ENCODE measurements at regions of chr16 and their contacts with region 1.

Region 1: GRCh38 chr16:88811769-88812512 is at the start of gene APRT:
- DNase-seq: peak; percentile 93
- H3K4me3 ChIP-seq: peak within 1 kb of the TSS; percentile 75
- H3K27ac ChIP-seq: peak within 1 kb of the TSS; percentile 76
- H3K4me1 ChIP-seq: peaks cover 24% of the 10 kb centered on the region
- CTCF ChIP-seq: no peak
- total RNA-seq, gene APRT: 168 and 216 TPM in 2 replicates

Region 2: DNA sequence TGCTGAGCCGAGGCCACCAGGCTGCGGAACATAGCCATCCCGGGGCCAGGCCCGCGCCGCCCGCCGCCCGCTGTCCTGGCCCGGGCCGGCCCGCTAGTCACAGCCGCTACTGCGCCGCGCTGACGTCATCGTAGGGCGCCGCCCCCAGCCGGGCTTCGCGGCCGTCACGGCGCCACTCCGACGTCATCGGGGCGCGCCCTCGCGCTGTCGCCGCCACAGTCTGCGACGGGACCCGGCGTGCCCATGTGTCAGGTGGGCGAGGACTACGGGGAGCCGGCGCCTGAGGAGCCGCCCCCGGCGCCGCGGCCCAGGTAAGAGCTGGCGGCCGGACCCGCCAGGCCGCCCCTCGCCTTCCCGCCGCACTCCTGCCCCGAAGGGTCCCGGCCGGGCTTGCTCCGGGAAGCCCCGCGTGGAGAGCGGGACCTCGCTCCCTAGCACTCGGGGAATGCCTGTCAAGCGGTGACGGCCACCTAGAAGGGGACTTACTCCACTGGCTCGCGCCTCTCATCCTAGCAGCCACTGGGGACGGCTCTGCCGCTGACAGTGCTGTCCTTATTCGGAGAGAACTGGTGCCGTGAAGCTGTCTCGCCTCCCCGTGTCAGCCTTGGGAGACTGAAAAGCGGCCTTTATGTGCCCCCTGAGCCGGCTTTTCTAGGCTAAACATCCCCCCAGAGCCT is 105.5 kb before region 1 on chr16 and contains the starts of genes CTU2 and RNF166:
- CTCF ChIA-PET with region 1: no interaction called
- POLR2A ChIA-PET with region 1: no interaction called
- intact Hi-C with region 1: no loop called
- DNase-seq: peak; percentile 91
- H3K4me3 ChIP-seq: peak within 1 kb of the TSS; percentile 89
- H3K27ac ChIP-seq: peak within 1 kb of the TSS; percentile 71
- H3K4me1 ChIP-seq: peaks cover 53% of the 10 kb centered on the region
- CTCF ChIP-seq: no peak
- total RNA-seq, gene CTU2: 18.5 and 21.9 TPM in 2 replicates
- total RNA-seq, gene RNF166: 39.2 and 52.4 TPM in 2 replicates

Region 3: GRCh38 chr16:88791755-88792550 is 20.0 kb before region 1 on chr16:
- CTCF ChIA-PET with region 1: interaction called, 8 read pairs
- POLR2A ChIA-PET with region 1: interaction called, 10 read pairs
- intact Hi-C with region 1: no loop called
- DNase-seq: no peak
- H3K4me3 ChIP-seq: peak overlapping the region; percentile 24
- H3K27ac ChIP-seq: peak overlapping the region; percentile 80
- H3K4me1 ChIP-seq: peaks cover 61% of the 10 kb centered on the region
- CTCF ChIP-seq: no peak

Region 4: GRCh38 chr16:88838991-88839529 is 27.1 kb after region 1 on chr16:
- CTCF ChIA-PET with region 1: no interaction called
- POLR2A ChIA-PET with region 1: no interaction called
- intact Hi-C with region 1: no loop called
- DNase-seq: no peak
- H3K4me3 ChIP-seq: no peak overlapping the region
- H3K27ac ChIP-seq: no peak overlapping the region
- H3K4me1 ChIP-seq: no peaks in the 10 kb centered on the region
- CTCF ChIP-seq: no peak

Region 5: GRCh38 chr16:88856828-88857733 is 45.1 kb after region 1 on chr16 and contains the starts of genes GALNS and TRAPPC2L:
- CTCF ChIA-PET with region 1: no interaction called
- POLR2A ChIA-PET with region 1: no interaction called
- intact Hi-C with region 1: loop called (anchors 1 kb)
- DNase-seq: peak; percentile 99
- H3K4me3 ChIP-seq: peak within 1 kb of the TSS; percentile 83
- H3K27ac ChIP-seq: peak within 1 kb of the TSS; percentile 6
- H3K4me1 ChIP-seq: peaks cover 25% of the 10 kb centered on the region
- CTCF ChIP-seq: no peak
- total RNA-seq, gene GALNS: 17.2 and 18.5 TPM in 2 replicates
- total RNA-seq, gene TRAPPC2L: 27.3 and 27.6 TPM in 2 replicates

Region 6: DNA sequence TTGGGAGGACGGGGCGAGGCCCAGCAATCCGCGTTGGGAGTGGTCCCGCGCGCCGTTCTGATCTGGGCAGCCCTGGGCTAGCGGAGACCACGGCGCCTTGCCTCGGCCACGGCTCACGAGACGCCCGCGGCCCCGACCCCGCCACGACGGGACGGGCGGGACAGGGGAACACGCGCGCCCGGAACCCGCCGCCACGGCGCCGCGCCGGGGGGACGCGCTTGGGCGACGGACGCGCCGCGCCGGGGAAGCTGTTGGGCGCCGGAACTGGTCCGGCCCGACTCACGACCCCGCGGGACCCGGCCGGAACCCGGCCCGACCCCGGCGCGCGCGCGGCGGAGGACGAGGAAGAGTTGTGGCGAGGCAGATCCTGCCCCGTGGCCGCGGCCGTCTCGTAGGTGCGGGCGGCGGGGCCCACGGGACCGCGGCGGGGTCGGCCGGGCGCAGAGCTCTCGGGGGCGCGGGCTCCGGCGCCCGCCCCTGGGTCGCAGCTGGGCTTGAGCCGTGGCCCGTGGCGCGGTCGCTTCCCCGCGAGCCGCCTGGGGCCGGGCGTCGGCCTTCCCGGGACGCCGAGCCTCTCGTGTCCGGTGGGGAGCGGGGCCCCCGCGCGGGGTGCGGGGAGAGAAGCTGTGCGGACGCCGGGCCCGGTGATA is 281.8 kb after region 1 on chr16 and contains the start of gene ACSF3:
- CTCF ChIA-PET with region 1: no interaction called
- POLR2A ChIA-PET with region 1: no interaction called
- intact Hi-C with region 1: loop called (anchors 10 kb)
- DNase-seq: peak; percentile 84
- H3K4me3 ChIP-seq: peak within 1 kb of the TSS; percentile 99
- H3K27ac ChIP-seq: peak within 1 kb of the TSS; percentile 98
- H3K4me1 ChIP-seq: peaks cover 49% of the 10 kb centered on the region
- CTCF ChIP-seq: no peak
- total RNA-seq, gene ACSF3: 97.9 and 112 TPM in 2 replicates

Region 7: DNA sequence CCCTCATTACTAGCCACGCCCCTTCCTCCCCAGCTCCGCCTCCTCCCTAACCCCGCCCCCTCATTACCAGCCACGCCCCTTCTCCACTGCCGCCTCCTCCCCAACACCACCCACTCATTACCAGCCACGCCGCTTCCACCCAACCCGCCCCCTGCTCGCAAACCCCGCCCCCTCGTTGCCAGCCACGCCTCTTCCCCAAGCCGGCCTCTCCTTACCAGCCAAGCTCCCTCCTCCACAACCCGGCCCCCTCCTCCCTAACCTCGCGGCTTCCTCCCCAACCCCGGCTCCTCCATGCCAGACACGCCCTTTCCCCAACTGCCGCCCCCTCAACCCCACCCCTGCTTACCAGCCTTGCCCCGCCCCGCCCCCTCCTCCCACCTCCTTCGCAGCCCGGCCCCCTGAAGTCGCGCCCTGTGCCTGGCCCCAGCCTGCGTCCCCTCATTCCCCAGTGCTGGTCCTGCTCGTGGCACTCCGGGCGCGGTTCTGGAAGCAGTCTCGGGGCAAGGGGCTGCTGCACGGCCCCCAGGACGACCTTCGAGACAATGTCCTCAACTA is 381.2 kb after region 1 on chr16:
- CTCF ChIA-PET with region 1: no interaction called
- POLR2A ChIA-PET with region 1: interaction called, 10 read pairs
- intact Hi-C with region 1: no loop called
- DNase-seq: peak; percentile 72
- H3K4me3 ChIP-seq: no peak overlapping the region
- H3K27ac ChIP-seq: no peak overlapping the region
- H3K4me1 ChIP-seq: no peaks in the 10 kb centered on the region
- CTCF ChIP-seq: no peak

Region 8: DNA sequence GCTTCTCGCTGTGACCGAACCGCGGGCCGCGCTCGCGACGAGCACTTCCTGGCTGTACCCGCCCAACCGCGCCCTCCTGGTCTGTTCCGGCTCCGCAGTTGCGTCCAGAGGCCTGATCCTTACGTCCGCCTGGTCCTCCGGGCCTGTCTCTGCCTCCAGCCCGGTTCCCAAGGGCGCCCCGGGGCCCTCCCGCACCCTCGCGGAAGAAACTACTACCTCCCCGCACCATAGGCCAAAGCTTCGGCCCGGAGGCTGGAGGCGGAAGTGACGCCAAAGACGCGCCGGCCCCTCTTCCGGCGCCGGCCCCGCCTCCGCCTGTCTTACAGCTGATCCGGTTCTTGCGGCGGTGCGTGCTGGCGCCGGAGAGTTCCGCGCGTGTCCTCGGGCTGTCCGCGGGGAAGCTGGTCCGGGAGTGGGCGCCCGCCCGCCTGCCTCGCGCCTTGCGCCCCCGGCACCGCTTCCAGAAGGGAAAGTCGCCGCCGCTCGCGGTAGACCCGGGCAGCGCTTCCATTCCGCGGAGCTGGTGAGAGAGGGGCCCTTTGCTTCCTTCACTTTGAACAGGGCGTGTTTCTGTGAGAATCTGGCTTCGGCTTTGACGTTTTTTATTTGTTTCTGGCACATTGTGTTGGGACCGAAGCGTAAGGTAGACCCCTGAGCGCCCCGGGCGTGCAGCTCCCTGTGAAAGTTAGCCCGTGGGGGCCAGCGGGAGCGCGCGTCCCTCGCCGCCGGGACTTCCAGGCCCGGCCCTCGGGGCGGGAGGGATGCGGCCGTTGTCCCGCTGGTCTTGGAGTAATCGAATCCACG is 405.6 kb after region 1 on chr16 and contains the start of gene ZNF778:
- CTCF ChIA-PET with region 1: no interaction called
- POLR2A ChIA-PET with region 1: no interaction called
- intact Hi-C with region 1: loop called (anchors 1 kb)
- DNase-seq: peak; percentile 86
- H3K4me3 ChIP-seq: peak within 1 kb of the TSS; percentile 99
- H3K27ac ChIP-seq: peak within 1 kb of the TSS; percentile 63
- H3K4me1 ChIP-seq: peaks cover 5% of the 10 kb centered on the region
- CTCF ChIP-seq: no peak
- total RNA-seq, gene ZNF778: 8.6 and 9.9 TPM in 2 replicates